IMR-90 (cell line): ENCODE measurements at regions of chr4 and their contacts with region 1.

Region 1: GRCh38 chr4:169033660-169034059 is 23.6 kb upstream of the CBR4 start:
- DNase-seq: no peak
- ATAC-seq: no peak
- H3K4me3 ChIP-seq: no peak overlapping the region
- H3K27ac ChIP-seq: no peak overlapping the region
- H3K4me1 ChIP-seq: peaks cover 3% of the 10 kb centered on the region; the same call in 1 of the 2 replicates
- H3K27me3 ChIP-seq: no peaks in the 10 kb centered on the region
- CTCF ChIP-seq: no peak
- POLR2A ChIP-seq: no peak
- RAD21 ChIP-seq: no peak

Region 2: GRCh38 chr4:168847771-168848511 is 185.7 kb before region 1 on chr4:
- CTCF ChIA-PET with region 1: no interaction called
- POLR2A ChIA-PET with region 1: no interaction called
- dilution Hi-C with region 1: no loop called
- in situ Hi-C with region 1: no loop called
- intact Hi-C with region 1: no loop called
- DNase-seq: no peak
- ATAC-seq: peak; percentile 28
- H3K4me3 ChIP-seq: peak overlapping the region; percentile 24; the same call in 1 of the 2 replicates
- H3K27ac ChIP-seq: peak overlapping the region; percentile 69
- H3K4me1 ChIP-seq: peaks cover 25% of the 10 kb centered on the region
- H3K27me3 ChIP-seq: no peaks in the 10 kb centered on the region
- CTCF ChIP-seq: no peak
- POLR2A ChIP-seq: no peak
- RAD21 ChIP-seq: no peak

Region 3: GRCh38 chr4:168931182-168931650 is 102.4 kb before region 1 on chr4:
- CTCF ChIA-PET with region 1: no interaction called
- POLR2A ChIA-PET with region 1: no interaction called
- dilution Hi-C with region 1: no loop called
- in situ Hi-C with region 1: no loop called
- intact Hi-C with region 1: no loop called
- DNase-seq: no peak
- ATAC-seq: peak; percentile 30; the same call in 1 of the 2 replicates
- H3K4me3 ChIP-seq: no peak overlapping the region
- H3K27ac ChIP-seq: no peak overlapping the region
- H3K4me1 ChIP-seq: no peaks in the 10 kb centered on the region
- H3K27me3 ChIP-seq: no peaks in the 10 kb centered on the region
- CTCF ChIP-seq: no peak
- POLR2A ChIP-seq: no peak
- RAD21 ChIP-seq: no peak

Region 4: GRCh38 chr4:168978001-168978700 is 55.5 kb before region 1 on chr4:
- CTCF ChIA-PET with region 1: no interaction called
- POLR2A ChIA-PET with region 1: no interaction called
- dilution Hi-C with region 1: no loop called
- in situ Hi-C with region 1: no loop called
- intact Hi-C with region 1: no loop called
- DNase-seq: peak; percentile 68
- ATAC-seq: peak; percentile 77
- H3K4me3 ChIP-seq: no peak overlapping the region
- H3K27ac ChIP-seq: no peak overlapping the region
- H3K4me1 ChIP-seq: peaks cover 3% of the 10 kb centered on the region; the same call in 1 of the 2 replicates
- H3K27me3 ChIP-seq: no peaks in the 10 kb centered on the region
- CTCF ChIP-seq: no peak
- POLR2A ChIP-seq: no peak
- RAD21 ChIP-seq: no peak

Region 5: GRCh38 chr4:169090484-169091215 is 57.0 kb after region 1 on chr4:
- CTCF ChIA-PET with region 1: no interaction called
- POLR2A ChIA-PET with region 1: no interaction called
- dilution Hi-C with region 1: no loop called
- in situ Hi-C with region 1: no loop called
- intact Hi-C with region 1: loop called (anchors 2 kb)
- DNase-seq: no peak
- ATAC-seq: no peak
- H3K4me3 ChIP-seq: no peak overlapping the region
- H3K27ac ChIP-seq: no peak overlapping the region
- H3K4me1 ChIP-seq: no peaks in the 10 kb centered on the region
- H3K27me3 ChIP-seq: no peaks in the 10 kb centered on the region
- CTCF ChIP-seq: no peak
- POLR2A ChIP-seq: no peak
- RAD21 ChIP-seq: no peak

Region 6: GRCh38 chr4:169110633-169111032 is 77.0 kb after region 1 on chr4:
- CTCF ChIA-PET with region 1: no interaction called
- POLR2A ChIA-PET with region 1: no interaction called
- dilution Hi-C with region 1: no loop called
- in situ Hi-C with region 1: no loop called
- intact Hi-C with region 1: loop called (anchors 5 kb)
- DNase-seq: no peak
- ATAC-seq: no peak
- H3K4me3 ChIP-seq: no peak overlapping the region
- H3K27ac ChIP-seq: no peak overlapping the region
- H3K4me1 ChIP-seq: peaks cover 5% of the 10 kb centered on the region
- H3K27me3 ChIP-seq: no peaks in the 10 kb centered on the region
- CTCF ChIP-seq: no peak
- POLR2A ChIP-seq: no peak
- RAD21 ChIP-seq: no peak